CD4-positive, alpha-beta memory T cell (primary cell): ENCODE measurements at regions of chr4 and their contacts with region 1.

Region 1: DNA sequence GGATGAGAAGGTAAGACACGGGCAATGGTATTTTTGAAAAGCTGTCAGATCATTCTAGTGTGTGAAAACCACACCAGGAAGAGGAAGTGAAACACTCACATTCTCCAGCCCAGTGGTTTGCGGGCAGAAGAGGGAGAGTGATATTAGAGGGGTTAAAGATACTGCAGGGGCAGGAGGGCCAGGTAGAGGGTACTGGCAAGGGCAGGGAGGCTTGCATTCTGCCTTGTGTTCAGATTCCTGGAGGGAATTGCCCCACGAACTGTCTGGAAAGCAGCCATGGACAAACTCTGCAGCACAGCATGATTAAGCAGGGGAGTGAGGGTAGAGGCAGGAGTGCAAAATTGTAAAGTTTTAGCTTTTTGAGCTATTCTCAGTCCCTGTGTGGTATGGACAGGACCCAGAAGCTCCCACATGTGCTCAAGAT is 30.9 kb downstream of the NIPAL1 start:
- DNase-seq: peak; percentile 40 to 67 (median 51)
- H3K4me3 ChIP-seq: no peak overlapping the region
- H3K4me3 Mint-ChIP-seq: peak overlapping the region in 7 of 8 donors; percentile 46 to 90 (median 77)
- H3K27ac ChIP-seq: no peak overlapping the region
- H3K27ac Mint-ChIP-seq: peak overlapping the region in 4 of 7 donors; percentile 0 to 52 (median 22)
- H3K4me1 ChIP-seq: peaks cover 57% of the 10 kb centered on the region
- H3K4me1 Mint-ChIP-seq: peaks cover 37 to 68% (median 52%) of the 10 kb centered on the region in 4 donors
- H3K27me3 ChIP-seq: no peaks in the 10 kb centered on the region
- H3K27me3 Mint-ChIP-seq: peaks cover 4 to 10% of the 10 kb centered on the region in 2 donors

Region 2: GRCh38 chr4:48065587-48066052 is 18.2 kb after region 1 on chr4:
- CTCF ChIA-PET with region 1: interaction called, 4 read pairs
- POLR2A ChIA-PET with region 1: no interaction called
- intact Hi-C with region 1: loop called (anchors 2 kb)
- DNase-seq: no peak
- H3K4me3 ChIP-seq: no peak overlapping the region
- H3K4me3 Mint-ChIP-seq: no peak overlapping the region
- H3K27ac ChIP-seq: no peak overlapping the region
- H3K27ac Mint-ChIP-seq: peak overlapping the region in 1 of 7 donors; percentile 22
- H3K4me1 ChIP-seq: no peaks in the 10 kb centered on the region
- H3K4me1 Mint-ChIP-seq: peaks cover 1 to 12% (median 3%) of the 10 kb centered on the region in 4 donors
- H3K27me3 ChIP-seq: no peaks in the 10 kb centered on the region
- H3K27me3 Mint-ChIP-seq: no peaks in the 10 kb centered on the region

Region 3: GRCh38 chr4:48578132-48578968 is 530.9 kb after region 1 on chr4:
- CTCF ChIA-PET with region 1: no interaction called
- POLR2A ChIA-PET with region 1: no interaction called
- intact Hi-C with region 1: no loop called
- DNase-seq: peak; percentile 49 to 62 (median 55)
- H3K4me3 ChIP-seq: no peak overlapping the region
- H3K4me3 Mint-ChIP-seq: no peak overlapping the region
- H3K27ac ChIP-seq: no peak overlapping the region
- H3K27ac Mint-ChIP-seq: peak overlapping the region in 3 of 7 donors; percentile 17 to 39 (median 26)
- H3K4me1 ChIP-seq: no peaks in the 10 kb centered on the region
- H3K4me1 Mint-ChIP-seq: peaks cover 0 to 5% (median 1%) of the 10 kb centered on the region in 4 donors
- H3K27me3 ChIP-seq: no peaks in the 10 kb centered on the region
- H3K27me3 Mint-ChIP-seq: no peaks in the 10 kb centered on the region

Region 4: GRCh38 chr4:48706736-48707135 is 659.3 kb after region 1 on chr4:
- CTCF ChIA-PET with region 1: no interaction called
- POLR2A ChIA-PET with region 1: no interaction called
- intact Hi-C with region 1: no loop called
- DNase-seq: no peak
- H3K4me3 ChIP-seq: no peak overlapping the region
- H3K4me3 Mint-ChIP-seq: no peak overlapping the region
- H3K27ac ChIP-seq: no peak overlapping the region
- H3K27ac Mint-ChIP-seq: peak overlapping the region in 1 of 7 donors; percentile 81
- H3K4me1 ChIP-seq: no peaks in the 10 kb centered on the region
- H3K4me1 Mint-ChIP-seq: peaks cover 22 to 40% (median 30%) of the 10 kb centered on the region in 4 donors
- H3K27me3 ChIP-seq: no peaks in the 10 kb centered on the region
- H3K27me3 Mint-ChIP-seq: no peaks in the 10 kb centered on the region